ENCODE measurements at regions of chr2 and their contacts with region 1.

Region 1: DNA sequence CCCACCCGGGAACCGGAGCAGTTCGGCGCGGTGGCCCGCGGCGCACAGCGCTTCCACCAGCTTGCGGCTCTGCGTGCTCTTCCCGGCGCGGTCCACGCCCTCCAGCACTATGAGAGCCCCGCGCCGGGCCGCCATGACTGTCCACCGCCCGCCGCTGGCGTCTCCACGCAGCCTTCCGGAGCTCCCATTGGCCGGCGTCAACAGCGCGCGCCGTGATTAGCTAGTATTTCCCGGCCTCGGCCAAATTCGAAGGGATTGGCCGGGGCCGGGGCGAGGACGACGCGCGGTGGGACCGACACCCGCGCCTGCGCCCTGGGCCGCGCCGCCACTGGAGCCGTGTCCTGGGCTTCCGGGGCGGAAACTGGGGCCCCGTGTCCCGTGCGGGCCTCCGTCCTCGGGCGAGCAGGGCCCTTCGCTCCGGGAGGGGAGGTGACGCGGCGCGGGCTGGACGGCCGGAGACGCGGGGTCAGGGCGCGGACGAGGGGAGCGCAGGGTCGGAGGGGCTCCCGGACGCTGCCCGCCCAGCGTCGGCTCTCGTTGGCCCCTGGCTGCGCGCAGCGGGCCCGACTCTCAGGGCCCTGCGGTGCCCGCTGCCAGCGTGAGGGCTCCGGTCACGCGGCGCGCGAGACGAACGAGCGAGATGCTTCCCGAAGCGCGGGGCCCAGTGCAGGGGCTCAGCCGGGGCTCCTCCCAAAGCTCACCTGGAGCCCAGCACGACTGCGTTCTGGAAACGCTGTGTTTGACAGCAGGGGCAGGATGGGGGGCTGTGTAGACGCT is at the start of gene DTYMK:
- DNase-seq: peak; percentile 86
- H3K4me3 ChIP-seq: peak within 1 kb of the TSS; percentile 95
- H3K27ac ChIP-seq: peak within 1 kb of the TSS; percentile 83
- H3K27me3 ChIP-seq: no peaks in the 10 kb centered on the region
- CTCF ChIP-seq: no peak
- polyA plus RNA-seq, gene DTYMK: 28.4 and 29.6 TPM in 2 replicates

Region 2: DNA sequence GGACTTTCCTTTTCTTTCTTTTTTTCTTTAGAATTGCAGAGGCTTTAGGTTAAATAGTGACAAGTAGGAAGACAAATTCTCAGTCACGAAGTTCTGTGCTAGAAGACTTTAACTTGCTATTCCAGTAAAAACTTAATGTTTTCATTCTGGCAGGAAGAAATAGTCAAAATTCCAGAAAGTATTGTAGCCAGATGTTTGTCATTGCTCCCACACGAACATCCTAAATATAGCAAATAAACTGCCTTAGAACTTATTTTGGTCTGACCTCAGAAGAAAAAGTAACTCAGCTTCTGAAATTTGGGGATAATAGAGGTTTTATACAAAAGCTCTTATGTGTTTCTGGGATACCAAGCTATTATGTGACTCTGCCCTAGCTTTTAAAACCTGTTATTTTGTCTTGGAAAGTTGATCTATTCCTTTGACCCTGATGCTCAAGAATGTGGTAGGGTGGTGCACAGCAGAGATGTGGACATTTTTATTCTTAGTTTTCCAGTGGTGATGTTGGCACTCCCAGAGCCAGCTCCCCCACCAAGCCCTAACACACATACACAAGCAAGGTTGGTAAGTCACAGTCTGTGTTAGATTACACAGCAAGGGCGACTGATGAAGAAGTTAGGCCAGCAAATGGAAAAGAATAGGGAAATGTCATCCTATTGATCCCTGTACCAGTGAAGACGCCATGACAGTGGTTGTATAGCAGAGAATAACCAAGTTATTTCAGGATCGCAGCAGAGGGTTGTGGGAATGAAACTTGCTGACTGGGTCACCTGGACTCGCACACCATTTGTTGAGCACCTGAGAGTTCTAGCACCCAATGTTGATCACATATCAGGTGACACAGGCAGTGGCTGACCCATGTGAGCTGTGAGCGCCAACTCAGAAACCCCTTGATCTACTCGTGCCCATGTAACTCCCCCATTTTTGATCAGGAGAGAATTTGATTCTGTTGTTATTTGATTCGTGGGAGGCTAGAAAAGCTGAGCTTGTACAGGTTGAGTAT is 307.1 kb before region 1 on chr2:
- CTCF ChIA-PET with region 1: no interaction called
- POLR2A ChIA-PET with region 1: interaction called, 13 read pairs
- DNase-seq: no peak
- H3K4me3 ChIP-seq: no peak overlapping the region
- H3K27ac ChIP-seq: peak overlapping the region; percentile 47
- H3K27me3 ChIP-seq: no peaks in the 10 kb centered on the region
- CTCF ChIP-seq: no peak

Region 3: DNA sequence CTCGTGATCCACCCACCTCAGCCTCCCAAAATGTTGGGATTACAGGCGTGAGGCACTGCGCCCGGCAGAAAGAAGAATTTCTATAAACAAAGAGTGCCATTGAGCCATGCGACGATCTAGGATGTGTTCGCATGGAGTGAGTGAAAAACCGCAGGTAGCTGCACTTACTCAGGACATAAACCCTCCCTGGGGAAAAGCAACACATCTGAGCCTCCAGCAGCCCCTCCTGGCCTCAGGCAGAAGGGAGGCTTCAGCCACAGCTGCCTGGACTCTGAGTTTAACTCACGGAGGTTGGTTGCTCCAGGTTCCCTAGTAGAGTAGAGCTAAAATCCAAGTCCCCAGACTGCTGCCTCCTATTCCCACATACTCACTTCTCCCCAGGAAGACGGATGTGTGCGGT is 167.2 kb before region 1 on chr2:
- CTCF ChIA-PET with region 1: no interaction called
- POLR2A ChIA-PET with region 1: no interaction called
- DNase-seq: no peak
- H3K4me3 ChIP-seq: no peak overlapping the region
- H3K27ac ChIP-seq: no peak overlapping the region
- H3K27me3 ChIP-seq: peaks cover 8% of the 10 kb centered on the region
- CTCF ChIP-seq: no peak

Region 4: DNA sequence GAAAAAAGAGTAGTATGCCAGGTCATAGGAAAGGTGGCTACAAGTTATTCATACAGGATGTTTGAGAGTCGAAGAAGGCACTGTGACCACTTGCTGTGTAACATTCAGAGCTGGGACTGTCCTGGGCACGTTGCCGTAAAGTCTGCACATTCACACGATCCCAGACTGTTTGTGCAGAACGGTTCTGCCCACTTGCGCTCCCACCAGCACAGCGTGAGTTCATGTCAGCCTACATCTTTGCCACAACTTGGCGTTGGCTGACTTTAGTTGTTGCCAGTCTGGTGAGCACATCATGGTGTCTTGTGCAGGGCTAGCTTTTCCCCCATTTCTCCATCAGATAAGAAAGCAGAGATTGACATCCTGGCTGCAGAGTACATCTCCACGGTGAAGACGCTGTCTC is 22.0 kb after region 1 on chr2:
- CTCF ChIA-PET with region 1: no interaction called
- POLR2A ChIA-PET with region 1: no interaction called
- DNase-seq: no peak
- H3K4me3 ChIP-seq: no peak overlapping the region
- H3K27ac ChIP-seq: no peak overlapping the region
- H3K27me3 ChIP-seq: no peaks in the 10 kb centered on the region
- CTCF ChIP-seq: no peak

Region 5: DNA sequence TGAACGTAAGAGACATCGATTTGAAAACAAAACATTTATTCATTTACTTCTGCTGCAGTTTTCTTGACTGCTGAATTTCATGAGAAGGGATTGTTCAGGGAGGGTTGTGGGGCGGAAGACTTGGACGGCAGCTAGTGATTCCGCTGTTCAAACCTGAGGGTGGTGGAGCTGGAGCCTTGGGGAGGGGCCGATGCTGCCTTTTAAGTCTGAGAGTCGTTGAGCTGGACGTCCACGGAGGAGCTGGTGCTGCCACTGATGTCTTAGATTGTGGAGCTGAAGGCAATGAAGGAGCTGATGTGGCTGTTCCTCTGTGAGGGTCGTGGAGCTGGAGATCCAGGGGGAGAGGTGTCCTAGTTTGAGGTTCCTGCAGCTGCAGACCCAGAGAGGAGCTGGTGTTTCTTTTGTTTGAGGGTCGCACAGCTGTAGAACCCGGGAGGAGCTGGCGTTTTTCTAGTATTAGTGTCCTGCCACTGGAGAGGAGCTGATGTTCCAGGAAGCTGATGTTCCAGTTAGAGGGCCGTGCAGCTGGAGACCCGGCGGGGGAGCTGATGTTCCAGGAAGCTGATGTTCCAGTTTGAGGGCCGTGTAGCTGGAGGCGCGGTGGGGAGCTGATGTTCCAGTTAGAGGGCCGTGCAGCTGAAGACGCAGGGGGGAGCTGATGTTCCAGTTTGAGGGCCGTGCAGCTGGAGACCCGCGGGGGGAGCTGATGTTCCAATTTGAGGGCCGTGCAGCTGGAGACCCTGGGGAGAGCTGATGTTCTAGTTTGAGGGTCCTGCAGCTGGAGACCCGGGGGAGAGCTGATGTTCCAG is 333.6 kb after region 1 on chr2:
- CTCF ChIA-PET with region 1: no interaction called
- POLR2A ChIA-PET with region 1: no interaction called
- DNase-seq: no peak
- H3K4me3 ChIP-seq: no peak overlapping the region
- H3K27ac ChIP-seq: no peak overlapping the region
- H3K27me3 ChIP-seq: peaks cover 53% of the 10 kb centered on the region
- CTCF ChIP-seq: no peak

Measured in AG04450 (cell line).